RWPE1 (cell line): ENCODE measurements at regions of chr17 and their contacts with region 1.

Region 1: DNA sequence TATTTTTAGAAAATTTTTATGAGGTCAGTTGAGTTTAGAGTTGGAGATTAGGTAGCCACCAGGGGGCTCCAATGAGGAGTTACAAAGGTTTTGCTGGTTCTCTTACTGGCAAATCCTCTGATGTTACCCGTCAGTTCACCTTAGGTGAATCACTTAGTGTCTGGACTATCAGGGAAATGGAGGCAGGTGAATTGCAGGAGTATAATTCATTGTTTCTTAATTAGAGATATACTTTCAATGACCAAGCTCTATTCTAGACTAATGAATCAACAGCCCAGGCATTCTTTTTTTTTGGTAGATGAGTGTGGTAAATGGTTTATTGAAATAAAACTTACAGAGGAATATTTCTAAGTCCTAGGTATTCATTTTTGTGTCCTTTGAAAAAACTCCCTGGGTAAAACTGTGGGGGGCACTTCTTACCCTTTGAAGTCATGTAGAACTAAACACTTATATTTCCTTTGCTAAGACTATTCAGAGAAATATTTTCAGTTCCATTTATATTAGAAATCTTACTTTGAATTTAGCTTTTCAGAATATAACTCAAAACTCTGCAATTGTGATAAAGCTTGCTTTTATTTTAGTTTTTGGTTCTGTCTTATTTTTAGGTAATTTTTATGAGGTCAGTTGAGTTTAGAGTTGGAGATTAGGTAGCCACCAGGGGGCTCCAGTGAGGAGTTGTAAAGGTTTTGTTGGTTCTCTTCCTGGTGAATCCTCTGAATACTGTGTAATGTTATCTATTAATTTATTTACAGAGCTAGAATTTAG is 17.7 kb downstream of the PSMD11 start:
- DNase-seq: peak; percentile 51
- H3K27ac ChIP-seq: no peak overlapping the region
- CTCF ChIP-seq: peak; percentile 45

Region 2: GRCh38 chr17:32475258-32475657 is 13.2 kb after region 1 on chr17:
- CTCF ChIA-PET with region 1: interaction called, 11 read pairs
- POLR2A ChIA-PET with region 1: no interaction called
- DNase-seq: no peak
- H3K27ac ChIP-seq: no peak overlapping the region
- CTCF ChIP-seq: no peak